GM13976 (cell line): ENCODE measurements at regions of chr3 and their contacts with region 1.

Region 1: DNA sequence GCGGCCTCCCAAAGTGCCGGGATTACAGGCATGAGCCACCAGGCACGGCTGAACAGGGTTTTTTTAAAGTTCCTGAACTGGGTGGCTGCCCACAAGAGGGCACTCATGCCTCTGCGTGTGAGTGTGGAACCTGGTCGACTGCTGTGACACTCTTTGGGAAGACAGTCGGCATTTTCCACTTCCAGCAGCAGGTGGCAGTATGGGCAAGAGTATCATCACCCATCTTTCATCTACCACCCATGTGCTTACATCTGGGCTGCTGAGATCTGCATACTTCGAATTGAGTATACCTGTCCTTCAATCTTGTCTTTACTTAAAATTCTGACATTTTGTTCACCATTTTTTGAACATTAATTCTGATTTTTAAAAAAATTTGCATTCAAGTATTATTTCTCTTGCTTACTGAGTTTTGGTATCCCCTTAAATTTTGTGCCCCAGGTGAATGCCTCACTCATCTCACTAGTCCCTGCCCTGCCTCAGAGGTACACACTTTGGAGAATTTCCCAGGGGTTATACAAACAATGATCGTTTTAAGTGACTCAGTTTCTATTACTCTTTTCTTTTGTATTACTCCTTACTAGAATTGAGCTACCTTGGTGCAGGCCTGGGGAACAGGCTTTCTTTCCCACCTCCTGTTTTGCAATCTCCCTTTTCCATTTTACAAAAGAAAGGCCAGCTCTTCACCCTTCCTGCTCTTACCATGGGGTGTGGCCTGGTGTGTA is 11.8 kb downstream of the CLEC3B start:
- DNase-seq: peak; percentile 91
- CTCF ChIP-seq: peak; percentile 95

Region 2: DNA sequence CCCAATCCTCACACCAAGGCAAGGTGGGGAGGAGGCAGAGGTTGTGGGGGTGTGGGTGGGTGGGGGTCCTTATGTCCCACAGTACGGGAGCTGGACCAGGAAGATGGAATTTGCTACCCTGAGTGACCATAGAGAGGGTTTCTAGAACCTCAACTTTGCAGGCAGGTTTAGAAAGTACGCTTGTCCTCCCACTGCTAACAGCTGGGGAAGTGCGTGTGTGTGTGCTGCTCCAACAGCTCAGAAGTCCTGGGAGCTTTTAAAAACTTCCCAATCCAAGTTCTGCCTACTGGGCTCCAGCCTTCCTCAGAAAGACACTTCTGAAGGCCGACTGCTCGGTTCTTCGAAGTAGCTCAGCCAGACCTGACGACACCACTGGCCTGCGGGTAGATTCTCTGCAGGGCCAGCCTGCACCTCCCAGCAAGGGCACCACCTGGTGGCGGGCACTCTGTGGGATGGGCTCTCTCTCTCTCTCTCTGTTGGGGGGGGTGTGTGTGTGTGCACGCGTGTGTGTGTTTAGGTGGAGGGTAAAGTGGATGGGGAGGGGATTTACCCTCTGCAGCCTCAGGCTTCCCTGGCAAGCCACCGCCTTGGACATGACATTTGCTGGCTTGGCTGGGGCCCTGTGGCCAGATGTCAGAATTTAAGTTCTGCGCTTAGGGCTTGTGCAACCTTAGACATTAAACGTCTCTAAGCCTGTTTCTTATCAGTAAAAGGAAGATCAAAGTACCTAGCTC is 172.6 kb after region 1 on chr3:
- in situ Hi-C with region 1: loop called (anchors 5 kb)
- DNase-seq: peak; percentile 68
- CTCF ChIP-seq: peak; percentile 44

Region 3: DNA sequence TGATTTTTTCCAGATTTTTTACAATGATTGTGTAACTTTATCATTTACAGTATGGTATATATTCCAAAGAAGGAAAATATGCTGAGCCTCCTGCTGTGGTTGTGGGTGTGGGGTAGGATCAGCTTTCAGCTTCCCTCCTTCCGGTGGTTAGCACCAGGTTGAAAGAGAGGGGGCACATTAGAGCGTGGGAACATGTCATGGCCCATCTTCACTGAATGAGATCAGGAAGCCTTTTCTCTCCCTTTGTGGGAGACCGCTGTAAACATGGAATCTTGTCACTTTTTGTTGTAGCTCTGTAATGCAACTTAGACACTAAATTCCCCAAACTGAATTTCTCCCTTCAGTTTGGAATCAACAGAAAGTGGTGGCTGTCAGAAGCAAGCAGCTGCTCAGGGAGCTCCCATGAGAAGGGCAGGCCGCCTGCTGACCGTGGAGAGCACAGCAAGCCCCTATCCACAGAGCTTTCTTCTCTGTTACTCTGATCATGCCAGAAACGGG is 470.0 kb after region 1 on chr3:
- in situ Hi-C with region 1: loop called (anchors 10 kb)
- DNase-seq: no peak
- CTCF ChIP-seq: no peak